Activated B cell treated with CpG ODN at 0.5 μM for 24 hours (primary cell): ENCODE measurements at regions of chr4 and their contacts with region 1.

Region 1: DNA sequence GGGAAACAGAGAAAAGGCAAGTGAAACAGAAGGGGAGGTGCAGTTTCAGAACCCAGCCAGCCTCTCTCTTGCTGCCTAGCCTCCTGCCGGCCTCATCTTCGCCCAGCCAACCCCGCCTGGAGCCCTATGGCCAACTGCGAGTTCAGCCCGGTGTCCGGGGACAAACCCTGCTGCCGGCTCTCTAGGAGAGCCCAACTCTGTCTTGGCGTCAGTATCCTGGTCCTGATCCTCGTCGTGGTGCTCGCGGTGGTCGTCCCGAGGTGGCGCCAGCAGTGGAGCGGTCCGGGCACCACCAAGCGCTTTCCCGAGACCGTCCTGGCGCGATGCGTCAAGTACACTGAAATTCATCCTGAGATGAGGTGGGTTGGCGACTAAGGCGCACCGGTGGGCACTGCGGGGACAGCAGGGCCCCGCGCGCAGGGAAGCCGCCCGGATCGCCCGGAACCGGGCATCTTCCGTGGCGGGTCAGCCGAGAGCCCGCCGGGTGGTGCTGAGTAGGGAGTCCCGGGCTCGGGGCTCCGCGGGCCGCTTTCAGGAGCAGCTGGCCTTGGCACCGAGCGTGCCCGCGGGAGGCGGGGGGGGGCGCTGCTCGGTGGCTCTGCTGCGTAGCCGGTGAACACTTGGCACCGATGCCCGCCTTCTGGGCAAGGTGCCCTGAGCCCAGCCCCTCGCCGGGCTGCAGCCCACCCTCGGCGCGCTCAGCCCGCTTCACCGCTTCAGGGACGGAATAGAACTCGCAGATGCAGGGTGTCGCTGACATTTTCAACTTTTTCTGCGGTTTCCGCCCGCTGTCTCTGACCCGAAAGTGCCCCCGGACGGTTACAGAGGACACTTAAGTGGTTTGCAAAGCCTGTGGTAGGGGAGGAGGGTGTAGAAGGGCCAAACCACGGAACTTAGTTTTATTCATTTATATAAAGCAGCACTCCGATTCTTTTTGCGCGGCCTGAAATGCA is at the start of gene CD38:
- DNase-seq: peak; percentile 42
- ATAC-seq: peak; percentile 74
- H3K4me3 Mint-ChIP-seq: peak within 1 kb of the TSS; percentile 88
- H3K27ac Mint-ChIP-seq: peak within 1 kb of the TSS; percentile 38
- H3K4me1 Mint-ChIP-seq: peaks cover 62% of the 10 kb centered on the region
- H3K27me3 Mint-ChIP-seq: no peaks in the 10 kb centered on the region
- CTCF ChIP-seq: no peak
- total RNA-seq, gene CD38: 5.0 and 5.8 TPM in 2 replicates

Region 2: DNA sequence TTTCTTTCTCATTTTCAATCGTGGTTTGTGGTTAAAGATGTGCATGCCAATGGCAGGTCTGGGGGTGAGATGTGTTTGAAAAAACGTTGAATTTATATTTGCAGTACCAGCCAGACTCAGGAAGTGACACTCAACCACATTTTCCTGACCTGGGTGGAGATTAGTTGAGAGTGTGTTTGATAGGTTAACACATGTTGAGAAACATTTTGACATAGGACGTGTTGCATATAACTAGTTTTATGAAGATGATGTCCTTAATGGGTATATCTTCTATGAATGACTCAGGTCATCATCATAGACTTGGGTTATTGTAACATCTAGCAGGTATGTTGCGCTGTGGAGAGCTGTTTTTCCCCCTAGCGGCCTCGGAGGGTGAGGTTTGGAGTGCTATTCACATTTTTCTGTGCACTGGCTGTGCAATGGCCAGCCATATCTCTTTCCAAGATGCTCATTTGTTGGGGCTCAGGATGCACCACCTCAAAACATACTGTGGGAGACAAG is 22.2 kb before region 1 on chr4:
- CTCF ChIA-PET with region 1: interaction called, 6 read pairs
- POLR2A ChIA-PET with region 1: no interaction called
- intact Hi-C with region 1: loop called (anchors 2 kb)
- DNase-seq: no peak
- ATAC-seq: peak; percentile 84
- H3K4me3 Mint-ChIP-seq: peak overlapping the region; percentile 44
- H3K27ac Mint-ChIP-seq: no peak overlapping the region
- H3K4me1 Mint-ChIP-seq: peaks cover 34% of the 10 kb centered on the region
- H3K27me3 Mint-ChIP-seq: no peaks in the 10 kb centered on the region
- CTCF ChIP-seq: peak; percentile 8

Region 3: GRCh38 chr4:15794905-15795304 is 16.3 kb after region 1 on chr4:
- CTCF ChIA-PET with region 1: interaction called, 5 read pairs
- POLR2A ChIA-PET with region 1: interaction called, 3 read pairs
- intact Hi-C with region 1: loop called (anchors 2 kb)
- DNase-seq: no peak
- ATAC-seq: no peak
- H3K4me3 Mint-ChIP-seq: no peak overlapping the region
- H3K27ac Mint-ChIP-seq: no peak overlapping the region
- H3K4me1 Mint-ChIP-seq: peaks cover 23% of the 10 kb centered on the region
- H3K27me3 Mint-ChIP-seq: no peaks in the 10 kb centered on the region
- CTCF ChIP-seq: no peak

Region 4: DNA sequence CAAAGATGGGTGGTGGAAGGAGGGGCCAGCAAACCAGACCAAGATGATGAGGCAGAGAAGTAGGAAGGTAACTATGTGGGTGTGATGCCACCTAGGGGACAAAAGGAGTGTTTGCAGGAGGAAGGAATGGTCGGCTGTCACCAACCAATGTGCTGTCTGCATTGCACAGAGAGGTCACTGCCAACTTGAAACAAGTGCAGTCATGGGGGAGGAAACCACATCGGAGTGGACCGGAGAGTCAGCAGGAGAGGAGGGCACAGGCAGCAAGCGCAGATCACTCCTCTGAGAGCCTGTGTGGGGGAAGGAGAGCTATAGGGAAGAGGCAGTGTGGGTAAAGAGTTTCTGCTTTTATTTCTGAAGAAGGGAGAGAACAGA is 222.9 kb after region 1 on chr4:
- CTCF ChIA-PET with region 1: no interaction called
- POLR2A ChIA-PET with region 1: no interaction called
- intact Hi-C with region 1: no loop called
- DNase-seq: peak; percentile 24
- ATAC-seq: peak; percentile 88
- H3K4me3 Mint-ChIP-seq: no peak overlapping the region
- H3K27ac Mint-ChIP-seq: no peak overlapping the region
- H3K4me1 Mint-ChIP-seq: no peaks in the 10 kb centered on the region
- H3K27me3 Mint-ChIP-seq: no peaks in the 10 kb centered on the region
- CTCF ChIP-seq: no peak